ENCODE measurements at regions of chr9 and their contacts with region 1.

Region 1: DNA sequence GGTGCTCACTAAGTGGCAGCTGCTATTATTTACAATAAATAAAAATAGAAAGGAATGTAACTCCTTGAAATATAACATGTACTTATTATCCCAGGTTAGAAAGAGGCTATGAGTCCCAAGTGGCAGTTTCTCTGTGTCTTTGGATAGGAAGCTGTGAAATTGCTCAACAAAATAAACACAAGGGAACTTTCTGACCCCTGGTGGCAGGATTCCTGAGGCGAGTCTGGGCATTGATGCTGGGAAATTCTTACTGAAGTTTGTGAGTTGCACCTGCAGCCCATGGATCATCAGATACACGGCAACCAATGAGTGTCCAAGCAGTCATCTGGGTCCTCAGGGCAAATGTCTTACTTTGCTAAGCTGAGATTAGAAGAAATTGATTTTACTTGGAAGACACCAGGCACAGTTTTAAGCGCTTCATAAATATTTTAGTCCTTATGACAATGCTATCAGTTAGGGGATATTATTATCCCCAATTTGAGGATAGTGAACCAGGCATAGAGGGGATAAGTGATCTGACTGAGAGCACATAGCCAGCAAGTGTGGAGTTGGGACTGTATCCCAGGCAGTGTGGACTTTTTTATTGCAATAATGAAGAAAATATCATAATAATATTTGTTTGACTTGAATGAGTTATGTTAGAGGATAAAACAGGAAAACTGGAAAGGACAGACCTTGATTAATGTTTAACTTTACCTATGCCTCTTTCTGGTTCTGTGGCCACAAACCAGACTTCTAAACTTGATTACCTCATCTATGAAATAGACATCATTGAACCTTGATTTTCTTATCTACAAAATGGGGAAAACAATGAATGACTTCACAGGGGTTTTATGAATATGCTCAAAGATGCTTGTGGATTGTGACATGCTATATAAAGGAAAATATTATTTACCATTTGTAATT is 265.5 kb upstream of the ADAMTSL1 start:
- DNase-seq: no peak
- H3K4me3 ChIP-seq: no peak overlapping the region
- CTCF ChIP-seq: peak; percentile 50

Region 2: GRCh38 chr9:17531642-17532254 is 676.7 kb before region 1 on chr9:
- CTCF ChIA-PET with region 1: interaction called, 11 read pairs
- POLR2A ChIA-PET with region 1: no interaction called
- DNase-seq: no peak
- H3K4me3 ChIP-seq: peak overlapping the region; percentile 44
- CTCF ChIP-seq: peak; percentile 49

Region 3: DNA sequence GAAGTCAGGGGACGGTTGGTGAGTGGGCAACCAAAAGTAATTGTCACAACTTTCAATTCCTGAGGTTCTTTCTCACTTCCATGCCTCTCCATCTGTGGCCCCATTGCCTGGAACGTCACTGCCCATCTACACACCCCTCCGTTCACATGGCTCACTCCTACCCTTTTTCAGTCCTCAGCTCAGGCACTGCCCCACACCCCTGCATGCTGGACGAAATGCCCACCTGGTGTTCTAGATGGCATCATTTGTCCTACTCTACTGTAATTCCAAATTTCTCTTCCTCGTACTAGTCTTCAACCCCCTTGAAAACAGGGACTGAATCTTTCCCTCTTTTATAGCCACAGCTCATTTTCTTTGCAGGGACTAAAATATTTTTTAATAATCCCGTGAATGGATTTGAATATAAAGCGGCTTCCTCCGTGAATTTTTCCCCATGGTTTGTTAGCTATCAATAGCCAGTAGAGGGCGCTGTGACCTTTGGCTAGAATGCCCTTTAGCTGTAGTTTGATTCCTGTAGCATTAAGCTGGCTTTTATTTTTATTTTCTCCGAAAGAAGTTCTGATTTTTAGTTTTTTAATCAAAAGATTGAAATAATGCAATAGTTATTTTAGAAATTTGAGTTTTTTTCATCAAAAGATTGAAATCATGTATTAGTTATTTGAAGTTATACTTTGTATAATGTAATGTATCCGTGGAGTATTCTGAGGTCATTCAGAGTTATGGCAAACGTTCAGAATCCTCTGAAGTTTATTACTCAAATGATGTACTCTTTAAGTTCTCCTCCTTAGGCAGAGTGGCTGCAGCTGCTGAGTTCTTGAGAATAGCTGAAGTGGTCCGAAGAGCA is 397.5 kb before region 1 on chr9:
- CTCF ChIA-PET with region 1: interaction called, 94 read pairs
- POLR2A ChIA-PET with region 1: no interaction called
- DNase-seq: peak; percentile 17
- H3K4me3 ChIP-seq: no peak overlapping the region
- CTCF ChIP-seq: peak; percentile 66

Region 4: GRCh38 chr9:17986595-17986994 is 221.8 kb before region 1 on chr9:
- CTCF ChIA-PET with region 1: no interaction called
- POLR2A ChIA-PET with region 1: no interaction called
- DNase-seq: no peak
- H3K4me3 ChIP-seq: no peak overlapping the region
- CTCF ChIP-seq: no peak

Region 5: DNA sequence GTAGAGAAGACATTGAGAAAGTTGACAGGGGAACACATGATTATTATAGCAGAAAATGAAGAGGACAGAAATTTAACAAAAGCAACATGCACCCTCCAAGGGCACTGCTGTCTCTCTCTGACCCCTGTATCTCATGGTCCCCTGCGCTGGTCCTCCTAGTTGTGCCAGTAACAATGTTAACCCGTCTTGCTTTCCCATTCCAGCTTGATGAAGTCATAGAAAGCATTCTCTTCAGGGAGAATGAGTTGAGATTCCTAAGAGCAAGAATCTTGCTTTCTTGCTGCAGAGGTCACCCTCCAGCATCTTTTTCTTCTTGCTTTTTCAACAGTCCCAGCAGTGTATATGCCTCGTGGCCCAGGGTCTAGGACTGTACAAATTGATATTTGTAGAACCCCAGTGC is 14.1 kb before region 1 on chr9:
- CTCF ChIA-PET with region 1: interaction called, 11 read pairs
- POLR2A ChIA-PET with region 1: no interaction called
- DNase-seq: no peak
- H3K4me3 ChIP-seq: no peak overlapping the region
- CTCF ChIP-seq: no peak

Region 6: GRCh38 chr9:18229992-18230676 is 21.7 kb after region 1 on chr9:
- CTCF ChIA-PET with region 1: interaction called, 14 read pairs
- POLR2A ChIA-PET with region 1: no interaction called
- DNase-seq: no peak
- H3K4me3 ChIP-seq: no peak overlapping the region
- CTCF ChIP-seq: no peak